ENCODE measurements at regions of chr14 and their contacts with region 1.

Region 1: DNA sequence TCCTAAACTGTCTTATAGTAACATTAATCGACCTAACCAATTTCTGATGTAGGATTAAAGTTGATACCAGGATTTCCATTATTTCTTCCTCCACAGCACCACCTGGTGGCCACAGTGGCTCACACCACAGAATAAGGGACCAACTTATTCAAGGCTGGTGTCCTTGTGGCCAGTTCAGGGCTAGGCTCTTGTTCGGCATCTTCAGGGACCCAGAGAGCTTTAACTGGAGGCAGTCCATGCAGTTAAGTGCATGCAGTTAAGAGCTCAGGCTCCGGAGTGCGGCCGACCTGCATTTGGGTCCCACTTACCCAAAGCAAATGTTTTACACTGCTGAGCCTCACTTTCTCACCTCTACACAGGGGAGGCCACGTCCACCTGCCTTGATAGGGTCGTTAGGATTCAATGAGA is 42.0 kb upstream of the GPR68 start:
- DNase-seq: peak; percentile 72 to 87 (median 81)
- ATAC-seq: peak; percentile 70 to 73
- H3K4me3 ChIP-seq: no peak overlapping the region
- H3K27ac ChIP-seq: no peak overlapping the region
- H3K4me1 ChIP-seq: no peaks in the 10 kb centered on the region
- H3K27me3 ChIP-seq: no peaks in the 10 kb centered on the region

Region 2: GRCh38 chr14:90883782-90884181 is 402.8 kb before region 1 on chr14:
- intact Hi-C with region 1: no loop called
- DNase-seq: no peak
- ATAC-seq: no peak
- H3K4me3 ChIP-seq: no peak overlapping the region
- H3K27ac ChIP-seq: no peak overlapping the region
- H3K4me1 ChIP-seq: no peaks in the 10 kb centered on the region
- H3K27me3 ChIP-seq: no peaks in the 10 kb centered on the region

Region 3: DNA sequence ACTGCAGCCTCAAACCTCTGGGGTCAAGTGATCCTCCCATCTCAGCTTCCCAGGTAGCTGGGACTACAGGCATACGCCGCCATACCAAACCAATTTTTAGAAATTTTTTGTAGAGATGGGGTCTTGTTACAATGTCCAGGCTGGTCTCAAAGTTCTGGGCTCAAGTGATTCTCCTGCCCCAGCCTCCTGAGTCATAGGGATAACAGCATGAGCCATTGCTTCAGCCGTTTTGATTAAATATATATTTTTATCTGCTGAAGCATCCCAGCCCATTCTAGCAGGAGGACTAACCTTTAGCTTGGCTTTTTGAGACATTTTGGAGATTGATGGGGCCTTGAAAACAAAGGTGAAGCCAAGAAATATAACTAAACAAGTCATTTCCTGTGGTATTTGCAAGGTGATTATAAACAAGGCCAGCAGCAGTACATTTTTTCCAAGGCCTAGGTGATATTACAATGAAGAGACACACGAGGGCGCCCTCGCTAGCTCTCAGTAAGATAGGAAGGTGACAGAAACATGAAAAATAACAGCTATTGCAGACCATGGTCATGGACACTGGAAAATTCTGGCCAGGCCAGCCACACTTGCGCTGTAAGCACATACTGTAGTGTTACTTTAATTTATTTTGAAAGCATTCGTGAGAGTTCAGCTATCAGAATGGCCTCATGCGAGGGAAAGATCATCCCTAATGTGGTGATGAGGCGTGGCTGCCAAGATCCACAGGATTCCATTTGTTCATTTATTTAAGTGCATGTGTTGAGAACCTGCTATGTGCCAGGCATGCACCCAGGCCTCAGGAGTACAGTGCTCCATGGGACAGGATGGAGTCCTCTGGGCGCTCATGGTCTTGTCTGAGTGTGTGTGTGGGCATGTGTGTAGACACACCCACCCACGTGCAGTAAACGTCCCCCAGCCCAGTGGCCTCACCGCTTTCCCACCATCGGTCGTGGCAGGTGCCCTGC is 109.2 kb before region 1 on chr14:
- intact Hi-C with region 1: loop called (anchors 5 to 10 kb)
- DNase-seq: peak in 1 of 3 donors; percentile 55
- ATAC-seq: peak; percentile 46 to 62
- H3K4me3 ChIP-seq: no peak overlapping the region
- H3K27ac ChIP-seq: no peak overlapping the region
- H3K4me1 ChIP-seq: no peaks in the 10 kb centered on the region
- H3K27me3 ChIP-seq: no peaks in the 10 kb centered on the region